ENCODE measurements at regions of chr1 and their contacts with region 1.

Region 1: GRCh38 chr1:241548008-241548407 is 15.8 kb downstream of the KMO start:
- DNase-seq: no peak

Region 2: DNA sequence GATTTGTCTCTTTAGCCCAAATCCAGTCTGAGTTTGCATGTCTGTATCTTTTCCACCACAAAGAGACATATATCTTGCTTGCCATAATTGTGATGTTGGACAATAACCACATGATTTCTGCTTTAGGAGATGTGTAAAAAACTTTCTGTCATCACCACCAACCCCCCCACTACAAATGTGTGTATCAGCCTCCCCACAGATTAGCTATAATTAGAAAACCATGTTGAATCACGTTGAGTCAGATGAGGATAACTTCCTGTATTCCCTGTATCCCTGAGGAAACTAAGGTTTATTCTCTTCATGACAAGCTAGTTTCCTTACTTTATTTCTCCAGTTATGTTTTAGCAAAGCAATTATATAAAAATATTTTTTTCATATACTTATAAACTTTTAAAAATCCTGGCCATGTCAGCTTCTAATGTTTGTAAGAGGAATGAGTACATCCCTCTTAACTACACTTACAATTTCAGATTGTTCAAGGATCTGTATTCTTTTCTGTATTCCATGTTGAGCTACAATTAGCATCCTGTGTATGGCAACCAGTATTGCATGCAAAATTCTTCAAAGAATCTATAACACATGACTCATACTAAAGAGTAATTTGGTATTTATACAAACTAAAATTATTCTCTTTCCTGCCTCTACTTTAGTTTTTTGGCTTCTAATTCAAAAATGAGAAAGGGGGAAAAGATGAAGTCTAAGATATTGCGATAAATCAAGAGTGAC is 1313.4 kb before region 1 on chr1:
- intact Hi-C with region 1: loop called in 1 of 2 experiments (anchors 5 kb)
- DNase-seq: no peak

Region 3: DNA sequence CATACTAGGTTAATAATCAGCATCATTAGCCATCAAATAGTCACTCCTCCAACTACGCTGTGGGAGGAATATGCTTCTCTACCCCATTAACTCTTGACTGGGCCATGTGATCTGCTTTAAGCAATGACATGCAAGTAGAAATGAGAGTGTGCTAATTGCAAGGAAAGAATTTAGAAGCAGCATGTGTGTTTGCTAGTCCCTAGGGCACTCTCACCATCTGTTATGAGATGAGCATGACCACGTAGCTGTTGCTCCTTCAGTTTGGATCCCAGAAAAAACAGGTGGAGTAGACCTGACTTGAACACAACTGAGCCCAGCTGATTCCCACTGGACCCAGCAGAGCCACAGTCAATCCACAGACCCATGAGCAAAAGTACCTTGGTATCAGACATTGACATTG is 171.3 kb before region 1 on chr1:
- intact Hi-C with region 1: no loop called
- DNase-seq: no peak

Region 4: GRCh38 chr1:241895013-241895412 is 347.0 kb after region 1 on chr1:
- intact Hi-C with region 1: loop called in 1 of 2 experiments (anchors 5 kb)
- DNase-seq: no peak

Measured in posterior vena cava (tissue), 2 donors.